CD8-positive, alpha-beta T cell (primary cell): ENCODE measurements at regions of chr11 and their contacts with region 1.

Region 1: GRCh38 chr11:43311791-43312607 is at the start of gene API5:
- DNase-seq: peak; percentile 84 to 96 (median 93)
- ATAC-seq: peak; percentile 94
- H3K4me3 ChIP-seq: peak within 1 kb of the TSS; percentile 84 to 85
- H3K4me3 Mint-ChIP-seq: peak within 1 kb of the TSS; percentile 92
- H3K27ac ChIP-seq: peak within 1 kb of the TSS; percentile 64 to 75
- H3K27ac Mint-ChIP-seq: peak within 1 kb of the TSS; percentile 88
- H3K4me1 ChIP-seq: peaks cover 34% of the 10 kb centered on the region
- H3K4me1 Mint-ChIP-seq: peaks cover 50% of the 10 kb centered on the region
- H3K27me3 ChIP-seq: no peaks in the 10 kb centered on the region
- H3K27me3 Mint-ChIP-seq: no peaks in the 10 kb centered on the region
- CTCF ChIP-seq: peak; percentile 63
- total RNA-seq, gene API5: 78.4 to 80.6 TPM

Region 2: DNA sequence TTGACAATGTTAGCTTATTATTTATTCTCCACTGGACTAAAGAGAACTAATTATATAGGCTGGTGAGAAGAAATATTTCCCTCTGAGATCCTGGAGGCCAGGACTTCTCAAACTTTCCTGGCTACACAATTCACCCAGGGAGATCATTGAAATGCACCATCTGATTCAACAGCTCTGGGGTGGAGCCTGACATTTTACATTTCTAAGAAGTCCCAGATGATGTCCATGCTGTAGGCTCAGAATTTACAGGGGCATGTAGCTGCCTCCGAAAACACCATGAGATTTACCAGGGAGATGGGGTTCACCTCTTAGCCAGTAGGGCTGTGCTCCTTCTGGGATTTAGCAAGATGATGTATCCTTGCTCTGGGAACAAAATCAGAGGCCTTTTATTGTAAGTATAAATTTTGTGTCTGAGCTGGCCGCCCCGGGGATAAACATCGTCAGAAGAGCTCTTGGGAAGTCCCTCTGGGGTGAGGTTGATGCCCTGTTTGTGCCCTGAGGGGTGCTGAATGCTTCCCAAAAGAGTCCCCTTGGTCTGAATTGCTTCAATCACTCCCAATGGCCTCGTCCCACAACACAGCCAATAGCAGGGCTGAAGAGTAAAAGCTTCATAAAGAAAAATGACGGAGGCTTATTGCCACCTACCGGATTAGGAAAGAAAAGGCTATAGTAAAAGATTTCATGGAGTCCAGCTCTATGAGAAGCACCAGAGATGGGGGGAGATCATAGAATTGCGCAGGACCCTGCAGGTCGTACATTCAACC is 33.6 kb before region 1 on chr11:
- CTCF ChIA-PET with region 1: no interaction called
- POLR2A ChIA-PET with region 1: no interaction called
- intact Hi-C with region 1: no loop called
- DNase-seq: no peak
- ATAC-seq: no peak
- H3K4me3 ChIP-seq: no peak overlapping the region
- H3K4me3 Mint-ChIP-seq: no peak overlapping the region
- H3K27ac ChIP-seq: no peak overlapping the region
- H3K27ac Mint-ChIP-seq: no peak overlapping the region
- H3K4me1 ChIP-seq: no peaks in the 10 kb centered on the region
- H3K4me1 Mint-ChIP-seq: no peaks in the 10 kb centered on the region
- H3K27me3 ChIP-seq: no peaks in the 10 kb centered on the region
- H3K27me3 Mint-ChIP-seq: peaks cover 25% of the 10 kb centered on the region
- CTCF ChIP-seq: no peak

Region 3: DNA sequence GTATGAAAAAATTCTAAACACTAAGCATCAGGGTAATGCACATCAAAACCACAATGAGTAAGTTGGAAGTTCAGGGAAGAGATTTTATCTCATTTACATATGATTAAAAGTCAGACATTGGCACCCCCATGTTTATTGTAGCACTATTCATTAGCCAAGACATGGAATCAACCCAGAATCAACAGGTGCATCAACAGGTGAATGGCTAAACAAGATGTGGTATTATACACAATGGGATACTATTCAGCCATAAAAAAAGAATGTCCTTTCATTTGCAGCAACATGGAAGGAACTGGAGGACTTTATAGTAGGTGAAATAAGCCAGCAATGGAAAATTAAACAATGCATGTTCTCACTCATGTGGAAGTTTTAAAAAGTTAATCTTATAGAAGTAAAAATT is 29.2 kb after region 1 on chr11:
- CTCF ChIA-PET with region 1: no interaction called
- POLR2A ChIA-PET with region 1: no interaction called
- intact Hi-C with region 1: no loop called
- DNase-seq: no peak
- ATAC-seq: no peak
- H3K4me3 ChIP-seq: no peak overlapping the region
- H3K4me3 Mint-ChIP-seq: no peak overlapping the region
- H3K27ac ChIP-seq: no peak overlapping the region
- H3K27ac Mint-ChIP-seq: no peak overlapping the region
- H3K4me1 ChIP-seq: no peaks in the 10 kb centered on the region
- H3K4me1 Mint-ChIP-seq: no peaks in the 10 kb centered on the region
- H3K27me3 ChIP-seq: no peaks in the 10 kb centered on the region
- H3K27me3 Mint-ChIP-seq: no peaks in the 10 kb centered on the region
- CTCF ChIP-seq: no peak

Region 4: GRCh38 chr11:43504316-43504950 is 192.4 kb after region 1 on chr11:
- CTCF ChIA-PET with region 1: no interaction called
- POLR2A ChIA-PET with region 1: no interaction called
- intact Hi-C with region 1: no loop called
- DNase-seq: no peak
- ATAC-seq: no peak
- H3K4me3 ChIP-seq: no peak overlapping the region
- H3K4me3 Mint-ChIP-seq: no peak overlapping the region
- H3K27ac ChIP-seq: no peak overlapping the region
- H3K27ac Mint-ChIP-seq: no peak overlapping the region
- H3K4me1 ChIP-seq: no peaks in the 10 kb centered on the region
- H3K4me1 Mint-ChIP-seq: no peaks in the 10 kb centered on the region
- H3K27me3 ChIP-seq: peaks cover 0 to 2% of the 10 kb centered on the region in 2 experiments
- H3K27me3 Mint-ChIP-seq: peaks cover 4% of the 10 kb centered on the region
- CTCF ChIP-seq: no peak

Region 5: GRCh38 chr11:44065841-44066731 is 754.1 kb after region 1 on chr11 and contains the start of gene ACCS:
- CTCF ChIA-PET with region 1: no interaction called
- POLR2A ChIA-PET with region 1: no interaction called
- intact Hi-C with region 1: loop called in 1 of 2 experiments (anchors 5 kb)
- DNase-seq: peak; percentile 80 to 96 (median 93)
- ATAC-seq: peak; percentile 96
- H3K4me3 ChIP-seq: peak within 1 kb of the TSS; percentile 80 to 83
- H3K4me3 Mint-ChIP-seq: peak within 1 kb of the TSS; percentile 91
- H3K27ac ChIP-seq: peak within 1 kb of the TSS; percentile 70 to 71
- H3K27ac Mint-ChIP-seq: peak within 1 kb of the TSS; percentile 92
- H3K4me1 ChIP-seq: peaks cover 6% of the 10 kb centered on the region
- H3K4me1 Mint-ChIP-seq: peaks cover 30% of the 10 kb centered on the region
- H3K27me3 ChIP-seq: no peaks in the 10 kb centered on the region
- H3K27me3 Mint-ChIP-seq: no peaks in the 10 kb centered on the region
- CTCF ChIP-seq: peak; percentile 83
- total RNA-seq, gene ACCS: 16.7 to 18.1 TPM